ENCODE measurements at regions of chr20 and their contacts with region 1.

Region 1: GRCh38 chr20:38221119-38221589 is 39.4 kb downstream of the KIAA1755 start:
- DNase-seq: peak; percentile 92 to 98
- H3K4me3 ChIP-seq: no peak overlapping the region
- H3K4me3 Mint-ChIP-seq: no peak overlapping the region
- H3K27ac Mint-ChIP-seq: no peak overlapping the region
- H3K4me1 ChIP-seq: peaks cover 13% of the 10 kb centered on the region
- H3K4me1 Mint-ChIP-seq: no peaks in the 10 kb centered on the region
- H3K27me3 ChIP-seq: no peaks in the 10 kb centered on the region
- H3K27me3 Mint-ChIP-seq: peaks cover 2% of the 10 kb centered on the region
- CTCF ChIP-seq: peak; percentile 100

Region 2: DNA sequence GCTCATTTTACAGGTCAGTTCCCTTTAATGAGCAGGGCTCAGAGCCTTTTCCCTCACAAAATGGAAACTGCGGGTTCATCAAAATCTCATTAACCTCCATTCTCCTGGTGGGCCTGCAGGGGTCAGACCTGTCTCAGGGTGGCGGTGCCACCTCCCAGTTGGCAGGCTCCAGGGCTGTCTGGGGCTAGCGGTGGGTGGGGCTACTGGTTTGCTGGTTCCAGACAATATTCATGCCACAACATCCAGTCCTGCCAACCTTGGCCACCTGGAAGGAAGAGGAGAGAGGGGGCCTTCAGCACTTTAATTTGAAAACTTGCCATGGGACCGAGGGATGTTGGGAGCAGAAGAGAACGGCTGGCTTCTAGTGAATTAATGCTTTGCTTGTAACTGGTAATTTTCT is 569.2 kb before region 1 on chr20:
- CTCF ChIA-PET with region 1: no interaction called
- POLR2A ChIA-PET with region 1: no interaction called
- intact Hi-C with region 1: no loop called
- DNase-seq: peak in 1 of 2 experiments; percentile 59
- H3K4me3 ChIP-seq: no peak overlapping the region
- H3K4me3 Mint-ChIP-seq: no peak overlapping the region
- H3K27ac Mint-ChIP-seq: no peak overlapping the region
- H3K4me1 ChIP-seq: peaks cover 7% of the 10 kb centered on the region
- H3K4me1 Mint-ChIP-seq: peaks cover 17% of the 10 kb centered on the region
- H3K27me3 ChIP-seq: no peaks in the 10 kb centered on the region
- H3K27me3 Mint-ChIP-seq: peaks cover 3% of the 10 kb centered on the region
- CTCF ChIP-seq: peak; percentile 63 to 73

Region 3: DNA sequence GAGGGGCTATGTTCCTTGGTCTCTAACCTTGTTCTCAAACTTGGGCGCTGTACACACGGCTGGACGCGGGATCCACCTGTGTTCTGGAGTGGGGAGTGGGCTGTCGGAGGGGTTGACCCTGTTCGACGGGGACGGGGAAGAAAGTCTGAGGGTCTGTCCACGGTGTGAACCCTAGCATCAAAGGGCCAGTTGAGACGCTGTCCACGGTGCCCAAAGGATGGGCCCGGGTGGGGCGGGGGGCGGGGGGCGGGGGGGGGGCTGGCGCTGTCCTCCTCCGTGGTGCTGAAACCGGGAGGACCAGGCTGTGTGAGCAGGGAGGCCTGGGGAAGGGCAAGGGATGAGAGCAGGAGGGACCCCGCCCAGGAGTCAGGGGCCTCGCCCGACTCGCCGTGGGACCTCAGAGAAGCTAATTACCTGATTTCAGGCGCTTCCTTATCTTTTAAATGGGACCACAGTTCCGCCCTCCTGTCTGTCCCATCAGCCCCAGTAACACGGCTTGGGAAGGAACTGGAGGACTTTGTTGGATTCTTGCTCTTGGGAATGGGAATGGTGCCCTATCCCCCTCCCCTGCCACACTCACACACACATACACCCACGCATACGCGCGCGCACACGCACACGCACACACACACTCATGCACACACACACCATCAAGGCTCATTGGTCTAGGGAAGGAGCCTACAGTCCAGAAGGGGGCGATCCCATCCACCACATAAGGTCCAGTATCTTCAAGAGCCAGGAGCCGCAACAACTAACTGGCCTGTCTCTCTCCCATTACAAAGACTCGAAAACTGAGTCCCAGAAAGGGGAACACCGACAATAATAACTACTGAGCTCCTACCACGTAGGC is 319.3 kb before region 1 on chr20:
- CTCF ChIA-PET with region 1: no interaction called
- POLR2A ChIA-PET with region 1: no interaction called
- intact Hi-C with region 1: loop called (anchors 1 kb)
- DNase-seq: peak; percentile 64 to 65
- H3K4me3 ChIP-seq: no peak overlapping the region
- H3K4me3 Mint-ChIP-seq: no peak overlapping the region
- H3K27ac Mint-ChIP-seq: no peak overlapping the region
- H3K4me1 ChIP-seq: no peaks in the 10 kb centered on the region
- H3K4me1 Mint-ChIP-seq: peaks cover 6% of the 10 kb centered on the region
- H3K27me3 ChIP-seq: peaks cover 4% of the 10 kb centered on the region
- H3K27me3 Mint-ChIP-seq: peaks cover 25% of the 10 kb centered on the region
- CTCF ChIP-seq: peak; percentile 29 to 45

Region 4: GRCh38 chr20:38113401-38114325 is 107.5 kb before region 1 on chr20:
- CTCF ChIA-PET with region 1: interaction called, 42 read pairs
- POLR2A ChIA-PET with region 1: no interaction called
- intact Hi-C with region 1: loop called (anchors 1 kb)
- DNase-seq: peak; percentile 93
- H3K4me3 ChIP-seq: no peak overlapping the region
- H3K4me3 Mint-ChIP-seq: peak overlapping the region; percentile 8
- H3K27ac Mint-ChIP-seq: peak overlapping the region; percentile 34
- H3K4me1 ChIP-seq: peaks cover 76% of the 10 kb centered on the region
- H3K4me1 Mint-ChIP-seq: peaks cover 77% of the 10 kb centered on the region
- H3K27me3 ChIP-seq: no peaks in the 10 kb centered on the region
- H3K27me3 Mint-ChIP-seq: no peaks in the 10 kb centered on the region
- CTCF ChIP-seq: peak; percentile 80 to 93

Region 5: GRCh38 chr20:38173237-38174156 is 47.7 kb before region 1 on chr20:
- CTCF ChIA-PET with region 1: interaction called, 32 read pairs
- POLR2A ChIA-PET with region 1: no interaction called
- intact Hi-C with region 1: loop called (anchors 2 kb)
- DNase-seq: peak; percentile 64 to 79
- H3K4me3 ChIP-seq: no peak overlapping the region
- H3K4me3 Mint-ChIP-seq: no peak overlapping the region
- H3K27ac Mint-ChIP-seq: no peak overlapping the region
- H3K4me1 ChIP-seq: peaks cover 17% of the 10 kb centered on the region
- H3K4me1 Mint-ChIP-seq: peaks cover 30% of the 10 kb centered on the region
- H3K27me3 ChIP-seq: no peaks in the 10 kb centered on the region
- H3K27me3 Mint-ChIP-seq: no peaks in the 10 kb centered on the region
- CTCF ChIP-seq: peak in 1 of 2 experiments; percentile 7

Region 6: GRCh38 chr20:38242848-38243449 is 21.8 kb after region 1 on chr20:
- CTCF ChIA-PET with region 1: interaction called, 11 read pairs
- POLR2A ChIA-PET with region 1: no interaction called
- intact Hi-C with region 1: no loop called
- DNase-seq: peak in 1 of 2 experiments; percentile 77
- H3K4me3 ChIP-seq: no peak overlapping the region
- H3K4me3 Mint-ChIP-seq: no peak overlapping the region
- H3K27ac Mint-ChIP-seq: no peak overlapping the region
- H3K4me1 ChIP-seq: peaks cover 7% of the 10 kb centered on the region
- H3K4me1 Mint-ChIP-seq: no peaks in the 10 kb centered on the region
- H3K27me3 ChIP-seq: no peaks in the 10 kb centered on the region; the same call in 1 of the 2 replicates
- H3K27me3 Mint-ChIP-seq: peaks cover 2% of the 10 kb centered on the region
- CTCF ChIP-seq: peak; percentile 70 to 94

Measured in Caco-2 (cell line).